GM12878 (cell line): ENCODE measurements at regions of chr10 and their contacts with region 1.

Region 1: DNA sequence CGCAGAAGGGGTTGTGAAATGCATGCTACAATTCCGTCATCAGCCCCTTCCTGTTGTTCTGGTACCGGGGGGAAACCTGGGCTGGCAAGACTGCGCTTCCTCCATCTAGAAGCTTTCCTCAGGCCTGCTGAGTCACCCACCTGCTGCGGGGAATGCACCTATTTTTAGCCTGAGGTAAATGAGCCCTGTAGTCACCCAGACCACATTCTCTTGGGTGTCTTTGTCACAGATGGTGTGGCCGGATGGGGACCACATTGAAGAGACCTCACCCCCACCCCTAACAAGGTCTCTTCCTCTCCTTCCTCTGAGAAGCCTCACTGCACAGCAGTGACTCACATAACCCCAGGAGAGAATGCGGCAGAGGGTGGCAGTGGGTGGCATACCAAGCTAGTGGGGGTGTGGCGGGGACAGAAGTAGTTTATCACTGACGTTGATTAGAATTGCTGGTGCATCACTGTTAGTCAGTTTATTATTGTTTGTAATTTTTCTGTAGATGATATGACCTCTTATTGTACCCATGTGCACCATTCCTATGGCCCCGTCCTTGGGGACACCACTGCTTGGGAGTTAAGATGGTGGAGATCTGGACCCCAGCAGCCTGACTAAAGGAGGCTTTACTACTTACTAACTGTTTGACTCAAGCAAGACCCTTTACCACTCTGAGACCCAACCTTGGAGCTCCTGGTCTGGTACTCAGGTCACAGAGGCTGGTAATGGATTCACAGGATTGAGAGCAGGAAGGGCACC is 83.0 kb upstream of the DUSP5 start:
- DNase-seq: peak; percentile 99
- ATAC-seq: peak; percentile 83
- H3K4me3 ChIP-seq: no peak overlapping the region
- H3K27ac ChIP-seq: peak overlapping the region; percentile 93
- H3K4me1 ChIP-seq: peaks cover 69% of the 10 kb centered on the region
- H3K27me3 ChIP-seq: no peaks in the 10 kb centered on the region
- CTCF ChIP-seq: no peak
- EP300 ChIP-seq: peak; percentile 97 to 99
- POLR2A ChIP-seq: peak; percentile 49; the same call in 1 of the 2 replicates
- RAD21 ChIP-seq: peak; percentile 38

Region 2: GRCh38 chr10:110007701-110008517 is 406.8 kb before region 1 on chr10 and contains the start of gene ADD3:
- CTCF ChIA-PET with region 1: no interaction called
- POLR2A ChIA-PET with region 1: no interaction called
- RAD21 ChIA-PET with region 1: no interaction called
- SMC1A ChIA-PET with region 1: no interaction called
- in situ Hi-C with region 1: no loop called
- intact Hi-C with region 1: no loop called
- DNase-seq: peak; percentile 48
- ATAC-seq: peak; percentile 81
- H3K4me3 ChIP-seq: peak within 1 kb of the TSS; percentile 90
- H3K27ac ChIP-seq: peak within 1 kb of the TSS; percentile 56
- H3K4me1 ChIP-seq: peaks cover 27% of the 10 kb centered on the region
- H3K27me3 ChIP-seq: no peaks in the 10 kb centered on the region
- CTCF ChIP-seq: no peak
- EP300 ChIP-seq: no peak
- POLR2A ChIP-seq: peak; percentile 79
- RAD21 ChIP-seq: no peak
- polyA plus RNA-seq, gene ADD3: 27.3 to 28.5 TPM

Region 3: GRCh38 chr10:110326351-110327032 is 88.2 kb before region 1 on chr10:
- CTCF ChIA-PET with region 1: interaction called, 6 read pairs
- POLR2A ChIA-PET with region 1: interaction called, 4 read pairs
- RAD21 ChIA-PET with region 1: interaction called, 15 read pairs
- SMC1A ChIA-PET with region 1: interaction called, 6 read pairs
- in situ Hi-C with region 1: no loop called
- intact Hi-C with region 1: no loop called
- DNase-seq: peak; percentile 51
- ATAC-seq: peak; percentile 49
- H3K4me3 ChIP-seq: no peak overlapping the region
- H3K27ac ChIP-seq: peak overlapping the region; percentile 79
- H3K4me1 ChIP-seq: peaks cover 39% of the 10 kb centered on the region
- H3K27me3 ChIP-seq: no peaks in the 10 kb centered on the region
- CTCF ChIP-seq: no peak
- EP300 ChIP-seq: peak in 1 of 2 experiments; percentile 60; a peak in 1 of 4 replicates
- POLR2A ChIP-seq: no peak
- RAD21 ChIP-seq: no peak

Region 4: DNA sequence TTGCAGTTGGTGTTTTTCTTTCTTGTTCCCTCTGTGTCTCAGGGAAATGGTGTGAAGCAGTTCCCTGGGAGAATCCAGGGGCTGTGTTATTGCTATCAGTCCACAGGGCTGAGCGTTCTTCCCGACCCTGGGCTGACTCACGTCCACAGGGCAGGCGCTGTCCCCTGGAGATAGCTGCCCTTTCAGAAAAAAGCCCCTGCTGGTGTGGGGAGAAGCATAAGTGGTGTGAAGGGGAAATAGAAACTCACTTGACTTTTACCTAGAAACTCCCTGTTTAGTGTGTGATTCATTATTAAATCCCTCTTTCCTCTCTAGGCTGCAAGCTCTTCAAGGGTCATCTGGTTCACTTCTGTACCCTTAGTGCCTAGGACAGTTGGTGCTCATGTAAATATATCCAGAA is 46.7 kb before region 1 on chr10:
- CTCF ChIA-PET with region 1: interaction called, 3 read pairs
- POLR2A ChIA-PET with region 1: interaction called, 25 read pairs
- RAD21 ChIA-PET with region 1: interaction called, 32 read pairs
- SMC1A ChIA-PET with region 1: interaction called, 39 read pairs
- in situ Hi-C with region 1: no loop called
- intact Hi-C with region 1: no loop called
- DNase-seq: no peak
- ATAC-seq: peak; percentile 86
- H3K4me3 ChIP-seq: no peak overlapping the region
- H3K27ac ChIP-seq: no peak overlapping the region; the same call in 1 of the 2 replicates
- H3K4me1 ChIP-seq: peaks cover 29% of the 10 kb centered on the region
- H3K27me3 ChIP-seq: no peaks in the 10 kb centered on the region
- CTCF ChIP-seq: no peak
- EP300 ChIP-seq: peak in 1 of 2 experiments; percentile 43; a peak in 1 of 4 replicates
- POLR2A ChIP-seq: no peak
- RAD21 ChIP-seq: no peak

Region 5: GRCh38 chr10:110395725-110396651 is 18.7 kb before region 1 on chr10:
- CTCF ChIA-PET with region 1: interaction called, 36 read pairs
- POLR2A ChIA-PET with region 1: interaction called, 117 read pairs
- RAD21 ChIA-PET with region 1: interaction called, 58 read pairs
- SMC1A ChIA-PET with region 1: interaction called, 81 read pairs
- in situ Hi-C with region 1: no loop called
- intact Hi-C with region 1: loop called (anchors 1 kb)
- DNase-seq: peak; percentile 91
- ATAC-seq: peak; percentile 92
- H3K4me3 ChIP-seq: no peak overlapping the region
- H3K27ac ChIP-seq: peak overlapping the region; percentile 69
- H3K4me1 ChIP-seq: peaks cover 16% of the 10 kb centered on the region
- H3K27me3 ChIP-seq: no peaks in the 10 kb centered on the region
- CTCF ChIP-seq: no peak
- EP300 ChIP-seq: peak; percentile 99 to 100
- POLR2A ChIP-seq: no peak
- RAD21 ChIP-seq: peak; percentile 24; the same call in 1 of the 2 replicates

Region 6: DNA sequence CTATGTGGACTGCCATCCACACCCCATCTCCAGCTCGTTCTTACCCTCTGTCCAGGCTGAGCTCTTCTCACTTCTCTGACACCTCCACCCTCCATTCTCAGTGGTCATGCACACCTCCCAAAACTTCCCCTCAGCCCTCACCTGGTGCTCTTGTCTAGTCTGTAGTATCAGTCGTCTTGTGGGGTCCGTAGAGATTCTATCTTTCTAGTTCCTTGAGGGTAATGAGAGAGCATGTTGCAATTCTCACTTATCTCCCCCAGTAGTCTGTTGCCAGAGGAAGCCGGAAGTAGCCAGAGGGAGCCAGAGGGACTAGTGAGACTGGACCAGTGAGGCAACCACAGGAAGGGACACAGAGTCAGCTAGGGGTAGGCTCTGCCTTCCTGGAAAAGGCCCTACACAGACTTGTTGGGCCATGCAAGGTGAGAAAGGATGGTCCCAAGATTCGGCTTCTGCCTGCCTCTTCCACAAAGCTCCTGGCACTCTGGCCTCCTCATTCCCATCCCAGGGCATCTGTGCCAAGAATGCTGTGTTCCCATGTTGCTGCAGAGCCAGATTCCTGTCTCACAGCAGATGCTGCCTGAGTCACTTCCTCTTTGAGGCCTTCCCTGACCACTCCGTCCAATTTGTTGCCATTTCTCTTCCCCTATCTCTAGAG is 32.3 kb after region 1 on chr10:
- CTCF ChIA-PET with region 1: interaction called, 5 read pairs
- POLR2A ChIA-PET with region 1: interaction called, 3 read pairs
- RAD21 ChIA-PET with region 1: interaction called, 10 read pairs
- SMC1A ChIA-PET with region 1: interaction called, 14 read pairs
- in situ Hi-C with region 1: no loop called
- intact Hi-C with region 1: no loop called
- DNase-seq: no peak
- ATAC-seq: no peak; the same call in 2 of the 3 replicates
- H3K4me3 ChIP-seq: no peak overlapping the region
- H3K27ac ChIP-seq: no peak overlapping the region
- H3K4me1 ChIP-seq: peaks cover 6% of the 10 kb centered on the region
- H3K27me3 ChIP-seq: no peaks in the 10 kb centered on the region; a peak in 1 of 4 replicates
- CTCF ChIP-seq: no peak
- EP300 ChIP-seq: no peak
- POLR2A ChIP-seq: no peak
- RAD21 ChIP-seq: no peak

Region 7: GRCh38 chr10:110535958-110536891 is 121.5 kb after region 1 on chr10:
- CTCF ChIA-PET with region 1: interaction called, 3 read pairs
- POLR2A ChIA-PET with region 1: no interaction called
- RAD21 ChIA-PET with region 1: interaction called, 4 read pairs
- SMC1A ChIA-PET with region 1: interaction called, 10 read pairs
- in situ Hi-C with region 1: no loop called
- intact Hi-C with region 1: loop called (anchors 2 kb)
- DNase-seq: peak; percentile 87
- ATAC-seq: peak; percentile 91
- H3K4me3 ChIP-seq: no peak overlapping the region; the same call in 1 of the 2 replicates
- H3K27ac ChIP-seq: peak overlapping the region; percentile 67
- H3K4me1 ChIP-seq: peaks cover 29% of the 10 kb centered on the region
- H3K27me3 ChIP-seq: no peaks in the 10 kb centered on the region
- CTCF ChIP-seq: peak; percentile 28 to 48 (median 37); a peak in 4 of 6 replicates
- EP300 ChIP-seq: peak; percentile 84 to 85; a peak in 3 of 4 replicates
- POLR2A ChIP-seq: no peak
- RAD21 ChIP-seq: peak; percentile 68

Region 8: DNA sequence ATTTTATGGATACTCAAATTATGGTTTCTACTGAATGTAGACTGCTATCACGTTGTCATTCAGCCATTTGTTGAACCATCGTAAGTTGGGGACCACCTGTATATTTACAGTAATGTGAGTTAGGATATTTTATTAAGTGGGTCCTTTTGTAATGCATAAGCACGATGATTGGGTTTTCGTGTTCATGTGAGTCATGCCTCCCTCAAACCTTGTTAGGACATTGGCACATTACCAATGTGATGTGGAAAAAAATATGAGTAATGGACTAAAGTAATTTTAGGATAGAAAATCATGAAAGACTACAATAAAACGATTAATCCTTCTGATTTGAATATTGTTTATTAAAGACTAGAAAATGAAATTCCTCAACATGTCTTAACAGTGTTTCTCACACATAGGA is 161.5 kb after region 1 on chr10:
- CTCF ChIA-PET with region 1: no interaction called
- POLR2A ChIA-PET with region 1: no interaction called
- RAD21 ChIA-PET with region 1: no interaction called
- SMC1A ChIA-PET with region 1: no interaction called
- in situ Hi-C with region 1: no loop called
- intact Hi-C with region 1: no loop called
- DNase-seq: no peak
- ATAC-seq: no peak
- H3K4me3 ChIP-seq: no peak overlapping the region
- H3K27ac ChIP-seq: no peak overlapping the region
- H3K4me1 ChIP-seq: no peaks in the 10 kb centered on the region; the same call in 1 of the 2 replicates
- H3K27me3 ChIP-seq: no peaks in the 10 kb centered on the region
- CTCF ChIP-seq: no peak
- EP300 ChIP-seq: no peak
- POLR2A ChIP-seq: no peak
- RAD21 ChIP-seq: no peak